ENCODE measurements at regions of chr19 and their contacts with region 1.

Region 1: GRCh38 chr19:13872695-13873389 is 4.1 kb upstream of the NANOS3 start:
- DNase-seq: peak; percentile 85 to 94 (median 92)
- H3K4me3 ChIP-seq: peak overlapping the region; percentile 18 to 76 (median 48)
- H3K27ac ChIP-seq: peak overlapping the region in 1 of 2 experiments; percentile 49
- H3K4me1 ChIP-seq: peaks cover 0 to 23% (median 15%) of the 10 kb centered on the region in 4 experiments
- H3K27me3 ChIP-seq: no peaks in the 10 kb centered on the region

Region 2: GRCh38 chr19:13839130-13839937 is 33.5 kb before region 1 on chr19:
- CTCF ChIA-PET with region 1: interaction called, 6 read pairs
- POLR2A ChIA-PET with region 1: interaction called, 555 read pairs
- DNase-seq: peak; percentile 78 to 95 (median 93)
- H3K4me3 ChIP-seq: peak overlapping the region; percentile 45 to 97 (median 86)
- H3K27ac ChIP-seq: peak overlapping the region; percentile 97 to 98
- H3K4me1 ChIP-seq: peaks cover 10 to 89% (median 85%) of the 10 kb centered on the region in 4 experiments
- H3K27me3 ChIP-seq: no peaks in the 10 kb centered on the region

Region 3: DNA sequence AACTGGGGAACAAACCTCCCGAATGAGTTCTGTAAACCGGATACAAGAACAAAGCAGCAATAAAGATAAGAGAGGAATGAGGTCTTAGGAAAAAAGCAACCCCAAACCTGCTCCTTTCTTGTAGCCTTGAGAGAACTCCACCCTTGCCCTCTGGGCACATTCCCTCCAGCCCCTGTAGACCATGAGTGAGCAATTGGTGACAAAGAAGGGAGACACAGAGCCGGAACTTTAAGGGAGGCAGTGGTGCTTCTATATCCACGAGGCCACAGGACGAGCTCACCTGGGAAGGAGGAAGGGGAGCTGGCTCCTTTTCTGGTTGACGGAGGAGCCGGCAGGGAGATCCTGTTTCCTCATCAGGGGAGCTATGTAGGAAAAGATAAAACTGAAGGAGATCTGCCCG is 20.0 kb after region 1 on chr19:
- CTCF ChIA-PET with region 1: no interaction called
- POLR2A ChIA-PET with region 1: no interaction called
- DNase-seq: no peak
- H3K4me3 ChIP-seq: no peak overlapping the region
- H3K27ac ChIP-seq: no peak overlapping the region
- H3K4me1 ChIP-seq: peaks cover 0 to 8% (median 4%) of the 10 kb centered on the region in 4 experiments
- H3K27me3 ChIP-seq: no peaks in the 10 kb centered on the region